ENCODE measurements at regions of chr14 and their contacts with region 1.

Region 1: GRCh38 chr14:75982266-75983018 is 647 bp upstream of the TGFB3 start:
- DNase-seq: peak; percentile 79 to 82 (median 80)
- H3K4me3 ChIP-seq: peak overlapping the region; percentile 29 to 72
- H3K4me3 Mint-ChIP-seq: peak overlapping the region; percentile 78 to 93 (median 89)
- H3K27ac ChIP-seq: peak overlapping the region; percentile 71
- H3K27ac Mint-ChIP-seq: peak overlapping the region; percentile 78 to 95 (median 93)
- H3K4me1 ChIP-seq: peaks cover 44% of the 10 kb centered on the region
- H3K4me1 Mint-ChIP-seq: peaks cover 27 to 68% (median 50%) of the 10 kb centered on the region in 4 donors
- H3K27me3 ChIP-seq: no peaks in the 10 kb centered on the region
- H3K27me3 Mint-ChIP-seq: no peaks in the 10 kb centered on the region

Region 2: GRCh38 chr14:75794615-75795038 is 187.8 kb before region 1 on chr14:
- CTCF ChIA-PET with region 1: interaction called, 15 read pairs
- POLR2A ChIA-PET with region 1: no interaction called
- intact Hi-C with region 1: loop called (anchors 10 kb)
- DNase-seq: no peak
- H3K4me3 ChIP-seq: no peak overlapping the region
- H3K4me3 Mint-ChIP-seq: no peak overlapping the region
- H3K27ac ChIP-seq: no peak overlapping the region
- H3K27ac Mint-ChIP-seq: peak overlapping the region in 1 of 7 donors; percentile 9
- H3K4me1 ChIP-seq: no peaks in the 10 kb centered on the region
- H3K4me1 Mint-ChIP-seq: no peaks in the 10 kb centered on the region
- H3K27me3 ChIP-seq: no peaks in the 10 kb centered on the region
- H3K27me3 Mint-ChIP-seq: no peaks in the 10 kb centered on the region

Region 3: DNA sequence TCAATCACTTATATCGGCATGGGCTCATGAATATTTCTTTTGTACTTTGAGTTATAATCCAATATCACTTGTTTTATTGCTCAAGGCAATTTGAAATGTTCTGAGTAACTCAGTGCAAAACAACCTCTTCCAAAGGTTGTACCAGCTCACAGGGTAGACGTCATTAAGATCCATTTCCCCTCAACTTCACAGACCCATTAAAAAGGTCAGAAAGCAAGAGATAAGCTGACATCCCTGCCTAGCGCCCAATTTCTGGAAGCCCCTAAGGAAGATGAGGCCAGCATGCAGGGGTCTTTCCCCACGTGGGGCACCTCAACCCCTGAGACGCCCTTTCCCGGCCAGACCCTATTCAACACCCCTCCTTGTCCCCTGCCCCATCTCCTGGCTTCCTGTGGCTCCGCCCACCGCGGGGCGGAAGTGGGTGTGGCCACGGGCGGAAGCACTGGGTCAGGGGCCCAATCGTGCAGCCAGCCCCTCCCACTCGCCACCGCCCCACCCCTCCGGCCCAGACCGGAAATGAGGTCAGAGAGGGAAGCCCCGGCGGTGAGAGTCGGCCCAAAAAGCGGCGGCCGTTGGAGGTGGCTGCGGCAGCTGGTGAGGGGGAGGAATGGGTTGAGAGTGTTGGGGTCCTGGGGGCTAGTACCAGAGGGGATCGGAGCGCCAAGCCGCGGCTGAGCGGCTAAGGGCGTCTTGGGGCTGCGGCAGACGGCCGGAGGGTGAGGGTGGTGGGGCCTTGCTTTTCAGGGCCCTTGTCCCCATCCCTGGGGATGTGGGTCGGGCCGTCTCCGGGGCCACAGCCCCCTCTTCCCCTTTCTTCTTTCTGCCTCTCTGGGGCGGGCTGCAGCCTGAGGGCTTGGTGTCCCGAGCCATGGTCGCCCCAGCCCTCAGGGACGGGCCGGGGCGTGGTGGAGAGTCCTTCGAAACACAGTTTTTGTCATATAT is 169.2 kb after region 1 on chr14 and contains the start of gene GPATCH2L:
- CTCF ChIA-PET with region 1: no interaction called
- POLR2A ChIA-PET with region 1: no interaction called
- intact Hi-C with region 1: loop called (anchors 1 kb)
- DNase-seq: peak; percentile 94 to 97 (median 96)
- H3K4me3 ChIP-seq: peak within 1 kb of the TSS; percentile 85 to 88
- H3K4me3 Mint-ChIP-seq: peak within 1 kb of the TSS; percentile 92 to 99 (median 96)
- H3K27ac ChIP-seq: peak within 1 kb of the TSS; percentile 94
- H3K27ac Mint-ChIP-seq: peak within 1 kb of the TSS; percentile 93 to 99 (median 97)
- H3K4me1 ChIP-seq: peaks cover 51% of the 10 kb centered on the region
- H3K4me1 Mint-ChIP-seq: peaks cover 37 to 59% (median 49%) of the 10 kb centered on the region in 4 donors
- H3K27me3 ChIP-seq: no peaks in the 10 kb centered on the region
- H3K27me3 Mint-ChIP-seq: no peaks in the 10 kb centered on the region
- total RNA-seq, gene GPATCH2L: 66.0 to 70.1 TPM

Measured in CD4-positive, alpha-beta memory T cell (primary cell).